ENCODE measurements at regions of chr2 and their contacts with region 1.

Region 1: GRCh38 chr2:38377050-38377828 is at the start of gene ATL2:
- DNase-seq: peak; percentile 90 to 96
- ATAC-seq: peak; percentile 92
- H3K4me3 ChIP-seq: peak within 1 kb of the TSS; percentile 84
- H3K27ac ChIP-seq: peak within 1 kb of the TSS; percentile 97 to 98
- H3K4me1 ChIP-seq: peaks cover 22% of the 10 kb centered on the region
- CTCF ChIP-seq: no peak
- EP300 ChIP-seq: no peak
- POLR2A ChIP-seq: peak; percentile 89
- RAD21 ChIP-seq: no peak
- polyA plus RNA-seq, gene ATL2: 75.1 and 85.3 TPM in 2 replicates

Region 2: GRCh38 chr2:38218591-38218991 is 158.6 kb before region 1 on chr2:
- CTCF ChIA-PET with region 1: no interaction called
- POLR2A ChIA-PET with region 1: no interaction called
- DNase-seq: no peak
- ATAC-seq: no peak
- H3K4me3 ChIP-seq: no peak overlapping the region
- H3K27ac ChIP-seq: no peak overlapping the region; a peak in 1 of 6 replicates
- H3K4me1 ChIP-seq: peaks cover 32% of the 10 kb centered on the region
- CTCF ChIP-seq: no peak
- EP300 ChIP-seq: no peak
- POLR2A ChIP-seq: no peak
- RAD21 ChIP-seq: no peak

Region 3: GRCh38 chr2:38245114-38245641 is 132.1 kb before region 1 on chr2:
- CTCF ChIA-PET with region 1: no interaction called
- POLR2A ChIA-PET with region 1: no interaction called
- DNase-seq: no peak
- ATAC-seq: no peak
- H3K4me3 ChIP-seq: no peak overlapping the region
- H3K27ac ChIP-seq: no peak overlapping the region
- H3K4me1 ChIP-seq: no peaks in the 10 kb centered on the region
- CTCF ChIP-seq: no peak
- EP300 ChIP-seq: no peak
- POLR2A ChIP-seq: no peak
- RAD21 ChIP-seq: no peak

Region 4: DNA sequence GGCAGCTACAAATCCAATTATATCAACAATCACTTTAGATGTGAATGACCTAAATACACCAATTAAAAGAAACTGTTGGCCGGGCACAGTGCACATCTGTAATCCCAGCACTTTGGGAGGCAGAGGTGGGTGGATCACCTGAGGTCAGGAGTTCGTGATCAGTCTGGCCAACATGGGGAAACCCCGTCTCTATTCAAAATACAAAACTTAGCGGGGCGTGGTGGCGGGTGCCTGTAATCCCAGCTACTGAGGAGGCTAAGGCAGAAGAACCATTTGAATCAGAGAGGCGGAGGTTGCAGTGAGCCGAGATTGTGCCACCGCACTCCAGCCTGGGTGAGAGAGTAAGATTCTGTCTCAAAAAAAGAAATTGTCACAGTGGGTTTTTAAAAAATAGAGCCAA is 49.7 kb before region 1 on chr2:
- CTCF ChIA-PET with region 1: interaction called, 14 read pairs
- POLR2A ChIA-PET with region 1: interaction called, 5 read pairs
- DNase-seq: no peak
- ATAC-seq: no peak
- H3K4me3 ChIP-seq: no peak overlapping the region
- H3K27ac ChIP-seq: no peak overlapping the region
- H3K4me1 ChIP-seq: no peaks in the 10 kb centered on the region
- CTCF ChIP-seq: no peak
- EP300 ChIP-seq: no peak
- POLR2A ChIP-seq: no peak
- RAD21 ChIP-seq: no peak

Region 5: DNA sequence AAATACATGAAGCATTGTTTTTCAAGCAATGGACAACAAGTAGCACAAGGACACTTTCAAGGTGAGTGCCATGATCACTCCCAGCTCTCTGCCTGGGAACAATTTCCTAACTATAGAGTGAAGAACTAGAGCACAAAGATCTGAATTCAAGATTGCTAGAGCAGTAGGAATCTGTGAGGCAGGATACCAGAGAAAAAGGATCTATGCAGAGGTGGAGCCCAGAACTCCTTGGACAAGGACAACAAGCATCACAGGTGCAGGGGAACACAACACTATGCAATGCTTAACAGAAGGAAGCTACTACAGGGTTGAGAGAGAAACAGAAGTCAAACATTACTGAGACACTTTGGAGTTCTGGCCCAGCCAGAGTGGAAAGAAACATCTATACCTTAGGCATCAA is 24.9 kb before region 1 on chr2:
- CTCF ChIA-PET with region 1: interaction called, 14 read pairs
- POLR2A ChIA-PET with region 1: no interaction called
- DNase-seq: no peak
- ATAC-seq: peak in 1 of 2 experiments; percentile 19; a peak in 1 of 6 replicates
- H3K4me3 ChIP-seq: no peak overlapping the region
- H3K27ac ChIP-seq: no peak overlapping the region
- H3K4me1 ChIP-seq: no peaks in the 10 kb centered on the region
- CTCF ChIP-seq: no peak
- EP300 ChIP-seq: no peak
- POLR2A ChIP-seq: no peak
- RAD21 ChIP-seq: no peak

Region 6: DNA sequence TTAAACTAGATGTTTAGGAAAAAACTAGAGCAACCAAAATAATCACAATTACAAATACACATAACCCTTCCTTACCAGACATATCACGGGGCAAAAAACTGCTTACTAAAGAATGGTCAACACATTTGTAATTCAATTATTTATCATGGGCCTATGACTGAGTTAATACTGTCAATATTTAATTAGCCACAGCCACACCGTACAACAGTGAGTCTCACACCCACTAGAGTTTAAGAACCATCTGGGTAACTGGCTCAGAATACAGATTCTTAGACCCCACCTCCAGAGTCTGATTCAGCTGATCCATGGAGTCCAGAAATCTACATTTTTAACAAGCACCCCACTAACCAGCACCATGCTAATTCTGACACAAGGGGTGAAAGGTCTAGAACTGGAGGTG is 15.0 kb before region 1 on chr2:
- CTCF ChIA-PET with region 1: interaction called, 56 read pairs
- POLR2A ChIA-PET with region 1: interaction called, 5 read pairs
- DNase-seq: no peak
- ATAC-seq: peak in 1 of 2 experiments; percentile 47; a peak in 3 of 6 replicates
- H3K4me3 ChIP-seq: no peak overlapping the region
- H3K27ac ChIP-seq: no peak overlapping the region
- H3K4me1 ChIP-seq: peaks cover 37% of the 10 kb centered on the region
- CTCF ChIP-seq: no peak
- EP300 ChIP-seq: no peak
- POLR2A ChIP-seq: no peak
- RAD21 ChIP-seq: no peak

Region 7: GRCh38 chr2:38465789-38466127 is 88.5 kb after region 1 on chr2:
- CTCF ChIA-PET with region 1: interaction called, 39 read pairs
- POLR2A ChIA-PET with region 1: interaction called, 7 read pairs
- DNase-seq: peak; percentile 63 to 66
- ATAC-seq: peak; percentile 77 to 89
- H3K4me3 ChIP-seq: no peak overlapping the region
- H3K27ac ChIP-seq: no peak overlapping the region
- H3K4me1 ChIP-seq: peaks cover 8% of the 10 kb centered on the region; the same call in 2 of the 3 replicates
- CTCF ChIP-seq: peak; percentile 61
- EP300 ChIP-seq: no peak
- POLR2A ChIP-seq: no peak
- RAD21 ChIP-seq: peak; percentile 64 to 68

Region 8: GRCh38 chr2:38508311-38509039 is 131.2 kb after region 1 on chr2:
- CTCF ChIA-PET with region 1: interaction called, 13 read pairs
- POLR2A ChIA-PET with region 1: no interaction called
- DNase-seq: peak; percentile 61 to 83
- ATAC-seq: peak; percentile 38 to 79; a peak in 3 of 6 replicates
- H3K4me3 ChIP-seq: no peak overlapping the region
- H3K27ac ChIP-seq: peak overlapping the region; percentile 25 to 67
- H3K4me1 ChIP-seq: peaks cover 14% of the 10 kb centered on the region
- CTCF ChIP-seq: peak; percentile 57
- EP300 ChIP-seq: no peak
- POLR2A ChIP-seq: no peak
- RAD21 ChIP-seq: peak; percentile 65 to 78

Measured in A549 (cell line).